ENCODE measurements at regions of chr7 and their contacts with region 1.

Region 1: DNA sequence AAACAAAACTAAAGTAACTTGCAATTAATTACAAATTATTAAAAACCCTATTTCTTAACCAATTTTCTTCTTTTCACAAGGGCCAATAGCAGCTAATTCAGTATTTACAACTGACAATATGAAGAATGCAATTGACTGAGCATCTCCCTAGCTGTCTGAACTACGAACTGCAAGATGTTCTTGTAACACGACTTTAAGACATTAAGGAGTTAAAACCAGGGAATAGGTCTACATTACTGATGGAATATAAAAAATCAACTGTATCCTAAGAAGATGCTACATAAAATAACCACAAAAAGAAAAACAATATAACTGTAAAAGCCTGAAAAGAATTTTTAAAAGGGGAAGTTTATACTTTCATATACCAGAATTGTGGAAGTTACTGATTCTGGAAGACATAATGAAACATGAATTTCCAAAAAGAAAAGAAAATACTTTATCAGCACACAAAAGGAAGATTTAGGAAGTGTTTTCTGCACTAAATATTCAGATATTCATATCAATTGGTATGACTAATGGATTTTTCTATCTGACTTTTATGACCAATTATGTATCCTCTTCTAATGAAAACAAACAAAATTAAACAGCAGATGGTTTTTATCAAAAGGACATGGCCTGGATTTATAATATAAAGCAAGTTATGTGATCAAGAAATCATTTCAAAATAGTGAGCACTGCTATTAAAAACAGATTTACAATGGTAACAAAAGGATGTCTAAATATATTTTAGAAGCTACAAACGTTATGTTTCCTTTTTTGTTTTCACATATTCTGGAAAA is 1.6 kb downstream of the GPR22 start:
- DNase-seq: no peak
- H3K4me3 ChIP-seq: no peak overlapping the region
- H3K27ac ChIP-seq: no peak overlapping the region
- H3K4me1 ChIP-seq: no peaks in the 10 kb centered on the region
- CTCF ChIP-seq: no peak

Region 2: GRCh38 chr7:107494315-107494751 is 22.9 kb after region 1 on chr7:
- CTCF ChIA-PET with region 1: no interaction called
- POLR2A ChIA-PET with region 1: interaction called, 14 read pairs
- intact Hi-C with region 1: no loop called
- DNase-seq: no peak
- H3K4me3 ChIP-seq: no peak overlapping the region
- H3K27ac ChIP-seq: no peak overlapping the region
- H3K4me1 ChIP-seq: no peaks in the 10 kb centered on the region
- CTCF ChIP-seq: no peak